Panc1 (cell line): ENCODE measurements at regions of chr4 and their contacts with region 1.

Region 1: DNA sequence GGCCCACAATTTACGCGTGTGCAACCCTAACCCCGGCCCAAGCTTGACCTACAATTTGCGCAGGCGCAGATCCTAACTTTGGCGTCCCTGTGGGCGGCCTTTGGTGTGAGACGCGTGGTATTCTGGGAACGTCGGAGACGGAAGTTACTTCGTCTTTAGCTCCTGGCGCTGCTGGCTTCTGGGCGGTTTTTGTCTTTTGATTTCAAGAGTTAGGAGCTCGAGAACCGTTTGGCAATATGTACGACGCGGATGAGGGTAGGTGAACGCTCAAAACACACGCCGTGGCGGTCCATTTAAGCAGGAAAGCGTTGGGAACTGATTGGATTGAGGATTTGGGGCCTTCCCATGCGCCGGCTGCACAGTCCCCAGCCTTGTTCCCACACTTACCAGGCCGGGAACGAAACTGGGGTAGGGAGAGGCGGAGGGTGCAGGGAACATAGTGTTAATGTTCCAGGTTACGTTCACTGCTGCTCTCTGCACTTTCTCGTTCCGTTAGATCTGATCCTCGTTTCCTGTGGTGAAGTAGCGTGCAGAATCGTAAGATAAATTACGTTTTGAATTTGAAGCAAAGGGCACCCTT is at the start of gene POLR2B:
- DNase-seq: peak; percentile 80
- ATAC-seq: peak; percentile 83
- H3K4me3 ChIP-seq: peak within 1 kb of the TSS; percentile 74 to 96
- H3K27ac ChIP-seq: peak within 1 kb of the TSS; percentile 95
- H3K4me1 ChIP-seq: peaks cover 13% of the 10 kb centered on the region
- H3K27me3 ChIP-seq: no peaks in the 10 kb centered on the region
- CTCF ChIP-seq: no peak
- total RNA-seq, gene POLR2B: 84.1 TPM

Region 2: GRCh38 chr4:56914336-56914735 is 64.5 kb before region 1 on chr4:
- CTCF ChIA-PET with region 1: no interaction called
- POLR2A ChIA-PET with region 1: interaction called, 11 read pairs
- in situ Hi-C with region 1: no loop called
- intact Hi-C with region 1: no loop called
- DNase-seq: no peak
- ATAC-seq: no peak
- H3K4me3 ChIP-seq: no peak overlapping the region
- H3K27ac ChIP-seq: no peak overlapping the region
- H3K4me1 ChIP-seq: peaks cover 10% of the 10 kb centered on the region
- H3K27me3 ChIP-seq: no peaks in the 10 kb centered on the region
- CTCF ChIP-seq: no peak

Region 3: DNA sequence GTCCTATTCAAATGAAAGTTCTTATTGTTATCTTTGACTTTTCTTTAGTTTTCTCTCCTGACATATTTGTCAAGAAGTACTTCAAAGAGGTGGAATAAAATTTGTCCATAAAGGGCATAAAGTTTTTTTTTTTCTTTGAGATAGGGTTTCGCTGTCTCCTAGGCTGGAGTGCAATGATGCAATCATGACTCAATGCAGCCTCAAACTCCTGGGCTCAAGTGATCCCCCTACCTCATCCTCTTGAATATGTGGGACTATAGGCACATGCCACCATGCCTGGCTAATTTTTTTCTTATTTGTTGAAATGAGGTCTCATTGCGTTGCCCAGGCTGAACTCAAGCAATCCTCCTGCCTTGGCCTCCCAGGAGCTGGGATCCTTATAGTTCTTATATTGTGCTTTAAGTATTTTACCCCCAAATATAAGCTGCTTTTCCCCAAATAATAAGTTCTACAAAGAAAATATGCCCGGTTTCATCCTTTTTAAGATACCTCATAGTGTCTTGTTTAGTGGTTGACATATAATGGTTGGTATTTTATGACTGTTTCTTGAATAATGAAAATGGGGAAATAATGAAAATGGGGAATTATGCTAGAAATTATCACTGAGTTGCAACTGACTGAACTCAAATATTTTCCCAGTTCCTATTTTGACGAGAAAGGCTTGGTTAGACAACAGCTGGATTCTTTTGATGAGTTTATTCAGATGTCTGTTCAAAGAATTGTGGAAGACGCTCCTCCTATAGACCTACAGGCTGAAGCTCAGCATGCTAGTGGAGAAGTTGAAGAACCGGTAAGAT is 11.5 kb after region 1 on chr4:
- CTCF ChIA-PET with region 1: no interaction called
- POLR2A ChIA-PET with region 1: interaction called, 11 read pairs
- in situ Hi-C with region 1: no loop called
- intact Hi-C with region 1: no loop called
- DNase-seq: no peak
- ATAC-seq: no peak
- H3K4me3 ChIP-seq: no peak overlapping the region
- H3K27ac ChIP-seq: no peak overlapping the region
- H3K4me1 ChIP-seq: no peaks in the 10 kb centered on the region
- H3K27me3 ChIP-seq: no peaks in the 10 kb centered on the region
- CTCF ChIP-seq: no peak

Region 4: GRCh38 chr4:57318698-57319097 is 339.9 kb after region 1 on chr4:
- CTCF ChIA-PET with region 1: no interaction called
- POLR2A ChIA-PET with region 1: no interaction called
- in situ Hi-C with region 1: no loop called
- intact Hi-C with region 1: no loop called
- DNase-seq: no peak
- ATAC-seq: no peak
- H3K4me3 ChIP-seq: no peak overlapping the region
- H3K27ac ChIP-seq: no peak overlapping the region
- H3K4me1 ChIP-seq: no peaks in the 10 kb centered on the region
- H3K27me3 ChIP-seq: no peaks in the 10 kb centered on the region
- CTCF ChIP-seq: no peak